Naive thymus-derived CD4-positive, alpha-beta T cell (primary cell): ENCODE measurements at regions of chr12 and their contacts with region 1.

Region 1: GRCh38 chr12:724194-724855 is 28.1 kb upstream of the WNK1 start:
- DNase-seq: peak in 1 of 9 donors; percentile 31
- ATAC-seq: peak; percentile 69
- H3K4me3 ChIP-seq: no peak overlapping the region
- H3K4me3 Mint-ChIP-seq: peak overlapping the region; percentile 1 to 56 (median 40)
- H3K27ac ChIP-seq: no peak overlapping the region
- H3K27ac Mint-ChIP-seq: peak overlapping the region; percentile 67 to 95 (median 89)
- H3K4me1 ChIP-seq: peaks cover 26 to 68% of the 10 kb centered on the region in 2 donors
- H3K4me1 Mint-ChIP-seq: peaks cover 37 to 96% (median 89%) of the 10 kb centered on the region in 7 donors
- H3K27me3 ChIP-seq: no peaks in the 10 kb centered on the region
- H3K27me3 Mint-ChIP-seq: no peaks in the 10 kb centered on the region

Region 2: GRCh38 chr12:414859-415258 is 309.5 kb before region 1 on chr12:
- CTCF ChIA-PET with region 1: no interaction called
- POLR2A ChIA-PET with region 1: no interaction called
- intact Hi-C with region 1: no loop called
- DNase-seq: no peak
- ATAC-seq: no peak
- H3K4me3 ChIP-seq: no peak overlapping the region
- H3K4me3 Mint-ChIP-seq: no peak overlapping the region
- H3K27ac ChIP-seq: no peak overlapping the region
- H3K27ac Mint-ChIP-seq: no peak overlapping the region
- H3K4me1 ChIP-seq: no peaks in the 10 kb centered on the region
- H3K4me1 Mint-ChIP-seq: peaks cover 0 to 4% (median 0%) of the 10 kb centered on the region in 7 donors
- H3K27me3 ChIP-seq: no peaks in the 10 kb centered on the region
- H3K27me3 Mint-ChIP-seq: no peaks in the 10 kb centered on the region

Region 3: GRCh38 chr12:459430-460258 is 264.7 kb before region 1 on chr12 and contains the start of gene B4GALNT3:
- CTCF ChIA-PET with region 1: interaction called, 10 read pairs
- POLR2A ChIA-PET with region 1: no interaction called
- intact Hi-C with region 1: no loop called
- DNase-seq: peak in 7 of 9 donors; percentile 17 to 40 (median 27)
- ATAC-seq: peak; percentile 80
- H3K4me3 ChIP-seq: peak within 1 kb of the TSS; percentile 72
- H3K4me3 Mint-ChIP-seq: peak within 1 kb of the TSS; percentile 82 to 90 (median 86)
- H3K27ac ChIP-seq: no peak within 1 kb of the TSS
- H3K27ac Mint-ChIP-seq: peak within 1 kb of the TSS in 2 of 9 donors; percentile 43 to 48
- H3K4me1 ChIP-seq: peaks cover 9 to 13% of the 10 kb centered on the region in 2 donors
- H3K4me1 Mint-ChIP-seq: peaks cover 8 to 31% (median 18%) of the 10 kb centered on the region in 7 donors
- H3K27me3 ChIP-seq: no peaks in the 10 kb centered on the region
- H3K27me3 Mint-ChIP-seq: peaks cover 5 to 83% (median 14%) of the 10 kb centered on the region in 5 donors
- total RNA-seq, gene B4GALNT3: 0.49 to 12.2 (median 1.3) TPM

Region 4: DNA sequence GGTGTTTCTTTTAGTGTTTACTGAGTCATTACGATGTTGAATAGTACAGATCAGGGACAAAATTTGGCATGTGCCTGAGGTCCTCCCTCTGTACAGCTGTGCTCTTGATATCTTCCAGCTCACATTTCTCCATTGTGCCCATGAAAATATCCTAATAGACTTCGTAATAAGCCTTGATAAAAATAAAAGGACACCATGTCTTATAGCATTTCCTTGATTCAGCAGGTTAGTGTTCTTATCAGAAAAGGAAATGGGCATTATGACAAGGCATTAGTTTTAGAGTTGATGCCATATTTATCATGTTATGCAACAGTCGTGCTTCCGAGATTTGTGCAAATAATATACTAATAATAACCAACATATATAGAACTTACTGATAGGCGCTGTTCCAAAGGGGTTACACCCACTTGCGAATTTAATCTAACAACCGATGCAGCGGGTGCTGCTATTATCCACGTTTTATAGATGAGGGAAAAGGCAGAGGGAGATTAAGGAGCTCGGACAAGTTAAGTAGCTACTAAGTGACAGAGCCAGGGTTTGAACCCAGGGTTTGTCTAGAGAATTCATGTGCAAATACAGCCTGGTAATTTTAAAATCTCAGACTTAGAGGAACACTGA is 12.9 kb after region 1 on chr12:
- CTCF ChIA-PET with region 1: no interaction called
- POLR2A ChIA-PET with region 1: interaction called, 9 read pairs
- intact Hi-C with region 1: loop called (anchors 1 to 2 kb)
- DNase-seq: no peak
- ATAC-seq: no peak
- H3K4me3 ChIP-seq: no peak overlapping the region
- H3K4me3 Mint-ChIP-seq: no peak overlapping the region
- H3K27ac ChIP-seq: no peak overlapping the region
- H3K27ac Mint-ChIP-seq: no peak overlapping the region
- H3K4me1 ChIP-seq: no peaks in the 10 kb centered on the region
- H3K4me1 Mint-ChIP-seq: peaks cover 0 to 7% (median 6%) of the 10 kb centered on the region in 7 donors
- H3K27me3 ChIP-seq: no peaks in the 10 kb centered on the region
- H3K27me3 Mint-ChIP-seq: no peaks in the 10 kb centered on the region

Region 5: DNA sequence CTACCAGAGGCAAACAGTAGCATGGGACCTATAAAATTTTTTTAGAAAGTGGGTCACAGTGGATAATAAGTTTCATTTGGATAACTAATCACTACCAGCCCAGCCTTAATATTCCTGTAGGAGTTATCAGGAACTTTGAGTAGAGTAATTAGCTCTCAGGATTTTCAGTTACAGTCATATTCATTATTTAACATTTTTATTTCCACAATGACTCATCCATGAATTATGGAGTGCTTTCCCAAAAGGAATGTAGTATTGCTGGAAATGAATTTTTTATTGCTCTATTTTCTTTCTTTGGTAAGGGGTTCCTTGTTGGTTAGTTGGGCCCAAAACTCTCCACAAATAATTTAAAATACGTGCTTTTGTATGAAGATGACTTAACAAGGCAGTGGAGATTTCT is 320.4 kb after region 1 on chr12:
- CTCF ChIA-PET with region 1: no interaction called
- POLR2A ChIA-PET with region 1: no interaction called
- intact Hi-C with region 1: no loop called
- DNase-seq: no peak
- ATAC-seq: no peak
- H3K4me3 ChIP-seq: no peak overlapping the region
- H3K4me3 Mint-ChIP-seq: no peak overlapping the region
- H3K27ac ChIP-seq: no peak overlapping the region
- H3K27ac Mint-ChIP-seq: no peak overlapping the region
- H3K4me1 ChIP-seq: no peaks in the 10 kb centered on the region
- H3K4me1 Mint-ChIP-seq: peaks cover 11 to 47% (median 29%) of the 10 kb centered on the region in 7 donors
- H3K27me3 ChIP-seq: no peaks in the 10 kb centered on the region
- H3K27me3 Mint-ChIP-seq: no peaks in the 10 kb centered on the region